ENCODE measurements at regions of chr10 and their contacts with region 1.

Region 1: GRCh38 chr10:28381903-28382347 is 79.1 kb upstream of the MPP7 start:
- DNase-seq: peak; percentile 89
- H3K4me3 Mint-ChIP-seq: no peak overlapping the region
- H3K27ac Mint-ChIP-seq: no peak overlapping the region
- H3K4me1 Mint-ChIP-seq: peaks cover 42% of the 10 kb centered on the region
- H3K27me3 Mint-ChIP-seq: peaks cover 9% of the 10 kb centered on the region

Region 2: GRCh38 chr10:28241741-28242399 is 140.1 kb before region 1 on chr10:
- CTCF ChIA-PET with region 1: interaction called, 44 read pairs
- DNase-seq: peak; percentile 54
- H3K4me3 Mint-ChIP-seq: no peak overlapping the region
- H3K27ac Mint-ChIP-seq: no peak overlapping the region
- H3K4me1 Mint-ChIP-seq: peaks cover 16% of the 10 kb centered on the region
- H3K27me3 Mint-ChIP-seq: no peaks in the 10 kb centered on the region

Region 3: GRCh38 chr10:28302638-28303488 is 79.1 kb before region 1 on chr10 and contains the start of gene MPP7:
- CTCF ChIA-PET with region 1: interaction called, 136 read pairs
- DNase-seq: peak; percentile 96
- H3K4me3 Mint-ChIP-seq: peak within 1 kb of the TSS; percentile 83
- H3K27ac Mint-ChIP-seq: peak within 1 kb of the TSS; percentile 81
- H3K4me1 Mint-ChIP-seq: peaks cover 54% of the 10 kb centered on the region
- H3K27me3 Mint-ChIP-seq: peaks cover 32% of the 10 kb centered on the region

Region 4: GRCh38 chr10:28326516-28327490 is 55.1 kb before region 1 on chr10:
- CTCF ChIA-PET with region 1: interaction called, 70 read pairs
- DNase-seq: no peak
- H3K4me3 Mint-ChIP-seq: no peak overlapping the region
- H3K27ac Mint-ChIP-seq: no peak overlapping the region
- H3K4me1 Mint-ChIP-seq: peaks cover 22% of the 10 kb centered on the region
- H3K27me3 Mint-ChIP-seq: no peaks in the 10 kb centered on the region

Region 5: DNA sequence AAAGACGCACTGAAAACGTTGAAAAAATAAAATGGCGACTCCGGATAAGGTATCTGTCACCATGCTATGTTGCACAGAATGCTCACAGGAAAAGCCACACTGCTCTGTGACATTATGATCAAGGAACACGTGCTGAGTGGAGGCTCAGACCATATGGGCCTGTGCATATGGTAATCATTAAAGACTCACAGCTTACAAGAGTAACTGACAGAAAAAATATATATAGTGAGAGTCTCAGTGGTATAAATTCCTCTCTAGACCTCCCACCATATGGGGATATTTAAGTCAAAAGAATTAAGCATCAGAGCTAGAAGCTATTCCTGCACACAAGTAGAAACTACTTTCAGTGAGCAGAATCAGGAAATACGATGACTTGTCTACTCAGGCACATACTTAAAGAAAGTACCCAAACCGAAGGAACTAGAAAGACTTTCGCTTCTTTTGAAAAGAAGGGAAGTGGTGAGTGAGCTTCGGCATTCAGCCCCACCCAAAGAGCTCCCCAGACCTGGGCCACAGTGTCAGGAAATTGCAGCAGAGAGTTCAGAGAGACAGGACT is 13.9 kb before region 1 on chr10:
- CTCF ChIA-PET with region 1: interaction called, 31 read pairs
- DNase-seq: peak; percentile 81
- H3K4me3 Mint-ChIP-seq: peak overlapping the region; percentile 62
- H3K27ac Mint-ChIP-seq: peak overlapping the region; percentile 97
- H3K4me1 Mint-ChIP-seq: peaks cover 60% of the 10 kb centered on the region
- H3K27me3 Mint-ChIP-seq: peaks cover 4% of the 10 kb centered on the region

Measured in activated naive CD4-positive, alpha-beta T cell treated with anti-CD3 and anti-CD28 coated beads, Interleukin-2, amount 10 ng/mL, durations not matched to agents 7 days and 5 days (primary cell).